ENCODE measurements at regions of chr9 and their contacts with region 1.

Region 1: DNA sequence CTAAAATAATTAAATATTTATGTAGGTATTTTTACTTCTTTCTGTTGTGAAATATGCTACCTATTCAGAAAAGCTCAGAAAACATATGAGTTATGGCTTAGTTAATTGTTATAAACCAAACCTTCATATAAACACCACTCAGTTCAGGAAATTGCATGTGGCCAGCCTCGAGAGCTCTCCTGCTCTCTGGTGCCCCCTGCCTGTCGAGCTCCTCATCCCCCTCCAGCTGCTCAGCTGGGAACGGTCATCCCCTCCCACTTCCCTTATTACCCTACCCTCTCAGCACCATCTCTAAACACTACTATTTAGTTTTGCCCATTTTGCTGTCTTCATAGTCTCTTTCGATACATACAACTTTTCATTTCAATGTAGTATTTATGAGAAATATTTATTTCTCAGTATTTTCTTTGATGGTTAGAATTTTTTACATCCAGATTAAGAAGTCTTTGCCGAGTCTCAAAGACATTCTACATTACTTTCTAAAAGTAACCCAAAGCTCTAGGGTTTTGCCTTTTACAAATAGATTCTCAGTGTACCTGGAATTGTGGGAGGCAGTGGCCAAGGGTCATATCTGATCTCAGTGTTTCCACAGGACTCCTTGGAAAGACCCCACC is 51.2 kb upstream of the SEMA4D start:
- DNase-seq: peak; percentile 89
- ATAC-seq: peak; percentile 98
- H3K4me3 Mint-ChIP-seq: no peak overlapping the region
- H3K27ac Mint-ChIP-seq: no peak overlapping the region
- H3K4me1 Mint-ChIP-seq: peaks cover 19% of the 10 kb centered on the region
- H3K27me3 Mint-ChIP-seq: peaks cover 4% of the 10 kb centered on the region

Region 2: GRCh38 chr9:89325733-89326132 is 223.4 kb before region 1 on chr9:
- CTCF ChIA-PET with region 1: interaction called, 11 read pairs
- POLR2A ChIA-PET with region 1: interaction called, 3 read pairs
- DNase-seq: no peak
- ATAC-seq: no peak
- H3K4me3 Mint-ChIP-seq: no peak overlapping the region
- H3K27ac Mint-ChIP-seq: no peak overlapping the region
- H3K4me1 Mint-ChIP-seq: peaks cover 19% of the 10 kb centered on the region
- H3K27me3 Mint-ChIP-seq: no peaks in the 10 kb centered on the region

Region 3: DNA sequence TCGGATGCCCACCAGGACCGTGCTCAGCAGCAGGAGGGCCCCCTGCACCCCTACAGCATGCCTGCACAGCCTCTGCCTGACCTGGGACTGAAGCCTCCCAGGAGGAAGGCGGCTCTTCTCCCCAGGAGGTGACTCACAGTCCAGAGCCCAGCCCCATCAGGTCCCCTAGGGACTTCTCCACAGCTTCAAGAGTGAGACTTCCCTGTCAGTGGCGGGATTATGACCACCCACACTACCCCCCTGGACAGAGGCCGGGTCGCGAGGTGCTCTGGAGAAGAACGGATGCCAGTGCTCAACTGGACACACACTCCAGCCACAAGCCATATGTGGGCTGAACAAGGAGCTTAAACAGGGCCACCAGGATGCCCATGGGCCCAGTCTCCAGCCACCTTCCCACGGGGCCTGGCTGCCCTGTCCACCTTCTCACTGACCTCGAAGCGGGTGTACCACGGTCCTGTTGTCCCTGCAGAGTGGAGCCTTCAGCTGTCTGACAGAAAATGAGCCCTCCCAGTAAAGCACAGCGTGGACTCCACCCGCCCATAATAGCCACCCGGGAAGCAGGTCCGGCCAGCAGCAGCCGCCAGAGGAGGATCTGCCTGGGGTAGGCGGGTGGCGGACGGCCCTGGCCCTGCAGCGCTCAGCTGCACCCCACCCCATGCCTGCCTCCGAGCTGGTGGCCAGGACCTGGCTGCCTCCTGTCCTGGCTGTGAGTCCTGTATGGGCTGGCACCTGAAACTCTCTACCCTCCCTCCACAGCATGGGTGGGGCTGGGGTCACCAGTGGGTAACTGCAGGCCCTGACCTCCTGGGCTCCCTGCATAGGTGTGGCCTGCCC is 105.9 kb before region 1 on chr9:
- CTCF ChIA-PET with region 1: interaction called, 31 read pairs
- POLR2A ChIA-PET with region 1: no interaction called
- DNase-seq: no peak
- ATAC-seq: no peak
- H3K4me3 Mint-ChIP-seq: no peak overlapping the region
- H3K27ac Mint-ChIP-seq: peak overlapping the region; percentile 84
- H3K4me1 Mint-ChIP-seq: peaks cover 94% of the 10 kb centered on the region
- H3K27me3 Mint-ChIP-seq: no peaks in the 10 kb centered on the region

Region 4: GRCh38 chr9:89466451-89467277 is 82.5 kb before region 1 on chr9:
- CTCF ChIA-PET with region 1: interaction called, 28 read pairs
- POLR2A ChIA-PET with region 1: interaction called, 5 read pairs
- DNase-seq: no peak
- ATAC-seq: peak; percentile 25
- H3K4me3 Mint-ChIP-seq: peak overlapping the region; percentile 46
- H3K27ac Mint-ChIP-seq: peak overlapping the region; percentile 96
- H3K4me1 Mint-ChIP-seq: peaks cover 98% of the 10 kb centered on the region
- H3K27me3 Mint-ChIP-seq: no peaks in the 10 kb centered on the region

Region 5: DNA sequence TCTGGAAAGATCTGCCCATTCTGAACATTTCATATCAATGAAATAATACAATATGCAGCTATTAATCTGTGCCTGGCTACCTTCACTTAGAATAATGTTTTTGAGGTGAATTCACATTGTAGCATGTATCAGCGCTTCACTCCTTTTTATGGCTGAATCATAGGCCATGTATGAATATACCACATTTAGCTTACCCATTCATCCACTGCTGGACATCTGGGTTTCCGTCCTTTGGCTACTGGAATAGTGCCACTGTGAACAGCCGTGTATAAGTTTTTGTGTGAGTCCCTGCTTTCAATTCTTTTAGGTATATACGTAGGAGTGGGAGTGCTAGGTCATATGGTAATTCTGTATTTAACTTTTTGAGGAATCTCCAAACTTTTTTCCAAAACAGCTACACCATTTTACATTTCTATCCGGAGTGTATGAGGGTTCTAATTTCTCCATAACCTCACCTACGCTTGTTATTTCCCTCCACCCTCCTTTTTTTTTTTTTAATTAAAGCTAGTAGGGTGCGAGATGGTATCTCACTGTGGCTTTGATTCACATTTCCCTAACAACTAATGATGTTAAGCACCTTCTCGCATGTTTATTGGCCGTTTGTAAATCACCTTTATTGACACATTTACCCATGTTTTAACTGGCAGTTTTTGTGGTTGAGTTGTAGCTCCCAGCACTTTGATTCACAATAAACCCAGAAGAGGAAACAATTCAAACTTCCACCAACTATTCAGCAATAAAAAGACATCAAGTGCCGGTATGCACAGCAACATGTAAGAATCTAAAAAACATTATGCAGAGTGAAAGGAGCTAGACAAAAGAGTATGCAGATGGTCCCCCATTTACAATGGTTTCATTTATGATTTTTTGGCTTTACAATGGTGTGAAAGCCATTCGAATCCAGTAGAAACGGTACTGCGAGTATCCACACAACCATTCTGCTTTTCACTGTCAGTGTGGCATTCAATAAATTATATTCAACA is 59.3 kb before region 1 on chr9:
- CTCF ChIA-PET with region 1: interaction called, 46 read pairs
- POLR2A ChIA-PET with region 1: no interaction called
- DNase-seq: no peak
- ATAC-seq: peak; percentile 61
- H3K4me3 Mint-ChIP-seq: peak overlapping the region; percentile 52
- H3K27ac Mint-ChIP-seq: peak overlapping the region; percentile 81
- H3K4me1 Mint-ChIP-seq: peaks cover 95% of the 10 kb centered on the region
- H3K27me3 Mint-ChIP-seq: no peaks in the 10 kb centered on the region

Region 6: DNA sequence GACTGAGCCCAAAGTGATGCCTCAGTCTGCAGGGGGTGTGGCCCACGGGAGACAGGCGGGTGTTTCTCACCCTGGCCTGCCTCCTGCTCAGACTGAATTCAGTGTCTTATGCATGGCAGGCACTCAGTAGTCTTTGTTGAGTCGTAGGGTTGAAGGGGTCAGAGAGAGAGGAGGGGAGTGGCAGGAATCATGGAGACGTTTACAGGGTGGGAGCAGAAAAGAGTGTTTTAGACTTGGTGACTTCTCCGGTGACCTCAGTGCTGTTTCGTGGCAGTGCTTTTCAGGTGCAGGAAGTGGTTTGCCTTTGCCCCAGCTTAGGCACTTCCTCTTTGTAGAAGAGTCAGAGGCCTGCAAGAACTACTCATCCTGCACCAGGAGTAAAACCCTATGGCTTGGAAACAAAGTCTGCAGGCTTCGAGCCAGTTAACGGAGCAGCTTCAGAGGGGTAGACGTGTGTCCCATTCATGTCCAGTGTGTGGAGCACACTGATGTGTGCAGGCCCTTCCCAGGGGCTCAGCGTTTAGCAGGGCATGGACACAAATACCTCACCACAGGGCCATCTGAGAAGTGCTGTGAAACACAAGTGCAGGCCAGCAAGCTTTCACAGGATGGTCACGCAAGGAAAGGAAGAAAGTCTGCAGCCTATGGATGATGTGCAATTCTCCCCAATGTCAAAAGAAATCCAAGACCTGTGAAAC is 26.7 kb before region 1 on chr9:
- CTCF ChIA-PET with region 1: interaction called, 50 read pairs
- POLR2A ChIA-PET with region 1: interaction called, 8 read pairs
- DNase-seq: peak; percentile 93
- ATAC-seq: peak; percentile 91
- H3K4me3 Mint-ChIP-seq: peak overlapping the region; percentile 51
- H3K27ac Mint-ChIP-seq: peak overlapping the region; percentile 95
- H3K4me1 Mint-ChIP-seq: peaks cover 94% of the 10 kb centered on the region
- H3K27me3 Mint-ChIP-seq: no peaks in the 10 kb centered on the region